Activated naive CD4-positive, alpha-beta T cell treated with anti-CD3 and anti-CD28 coated beads for 36 hours (primary cell): ENCODE measurements at regions of chr17 and their contacts with region 1.

Region 1: GRCh38 chr17:77666881-77667395 is 291.6 kb upstream of the TNRC6C start:
- DNase-seq: peak; percentile 86
- H3K4me3 Mint-ChIP-seq: peak overlapping the region; percentile 94
- H3K27ac Mint-ChIP-seq: peak overlapping the region; percentile 98
- H3K4me1 Mint-ChIP-seq: peaks cover 49% of the 10 kb centered on the region
- H3K27me3 Mint-ChIP-seq: no peaks in the 10 kb centered on the region

Region 2: DNA sequence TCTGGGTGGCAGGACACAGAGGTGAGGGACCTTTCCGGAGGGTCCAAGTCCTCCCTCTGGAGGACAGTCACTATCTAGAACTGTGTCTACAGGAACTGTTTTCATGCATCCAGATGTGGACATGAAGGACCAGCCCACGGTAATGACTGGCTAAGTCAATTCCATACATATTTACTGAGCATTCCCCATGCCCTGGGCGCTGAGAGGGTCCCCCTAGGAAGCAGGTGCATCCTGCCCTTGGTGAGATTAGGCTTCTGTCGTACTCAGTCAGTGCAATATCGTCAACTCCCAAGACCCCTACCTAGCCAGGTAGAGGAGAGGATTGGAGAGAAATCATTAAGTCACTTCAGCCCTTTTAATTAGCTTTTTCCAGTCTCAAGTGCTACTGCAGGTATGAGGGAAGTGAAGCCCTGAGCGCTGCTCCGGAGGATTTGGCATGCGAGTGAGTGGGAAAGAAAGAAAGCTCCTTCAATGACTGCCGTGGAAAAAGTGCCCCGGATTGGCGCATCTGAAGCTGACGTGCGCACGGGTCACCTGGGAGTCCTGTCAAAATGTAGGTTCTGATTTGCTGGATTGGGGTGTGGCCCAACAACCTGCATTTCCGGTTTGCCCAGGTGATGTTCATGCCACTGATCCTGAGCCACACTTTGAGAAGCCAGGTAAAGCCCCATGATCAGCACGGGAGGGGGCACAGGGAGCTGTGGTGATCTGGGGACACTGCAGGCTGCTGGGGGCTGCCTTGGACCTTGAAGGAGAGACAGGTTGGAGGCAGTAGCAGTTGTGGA is 75.8 kb before region 1 on chr17:
- CTCF ChIA-PET with region 1: no interaction called
- intact Hi-C with region 1: no loop called
- DNase-seq: no peak
- H3K4me3 Mint-ChIP-seq: no peak overlapping the region
- H3K27ac Mint-ChIP-seq: no peak overlapping the region
- H3K4me1 Mint-ChIP-seq: peaks cover 5% of the 10 kb centered on the region
- H3K27me3 Mint-ChIP-seq: no peaks in the 10 kb centered on the region

Region 3: GRCh38 chr17:77609553-77610517 is 57.1 kb before region 1 on chr17:
- CTCF ChIA-PET with region 1: no interaction called
- intact Hi-C with region 1: loop called (anchors 1 kb)
- DNase-seq: peak; percentile 86
- H3K4me3 Mint-ChIP-seq: peak overlapping the region; percentile 58
- H3K27ac Mint-ChIP-seq: peak overlapping the region; percentile 81
- H3K4me1 Mint-ChIP-seq: peaks cover 25% of the 10 kb centered on the region
- H3K27me3 Mint-ChIP-seq: no peaks in the 10 kb centered on the region

Region 4: GRCh38 chr17:77634710-77635109 is 32.2 kb before region 1 on chr17:
- CTCF ChIA-PET with region 1: no interaction called
- intact Hi-C with region 1: loop called (anchors 1 kb)
- DNase-seq: peak; percentile 84
- H3K4me3 Mint-ChIP-seq: no peak overlapping the region
- H3K27ac Mint-ChIP-seq: peak overlapping the region; percentile 59
- H3K4me1 Mint-ChIP-seq: peaks cover 17% of the 10 kb centered on the region
- H3K27me3 Mint-ChIP-seq: no peaks in the 10 kb centered on the region

Region 5: GRCh38 chr17:77681861-77682260 is 14.9 kb after region 1 on chr17:
- CTCF ChIA-PET with region 1: no interaction called
- intact Hi-C with region 1: no loop called
- DNase-seq: no peak
- H3K4me3 Mint-ChIP-seq: no peak overlapping the region
- H3K27ac Mint-ChIP-seq: no peak overlapping the region
- H3K4me1 Mint-ChIP-seq: no peaks in the 10 kb centered on the region
- H3K27me3 Mint-ChIP-seq: no peaks in the 10 kb centered on the region